Dorsolateral prefrontal cortex (tissue), 120 donors: ENCODE measurements at regions of chr9 and their contacts with region 1.

Region 1: DNA sequence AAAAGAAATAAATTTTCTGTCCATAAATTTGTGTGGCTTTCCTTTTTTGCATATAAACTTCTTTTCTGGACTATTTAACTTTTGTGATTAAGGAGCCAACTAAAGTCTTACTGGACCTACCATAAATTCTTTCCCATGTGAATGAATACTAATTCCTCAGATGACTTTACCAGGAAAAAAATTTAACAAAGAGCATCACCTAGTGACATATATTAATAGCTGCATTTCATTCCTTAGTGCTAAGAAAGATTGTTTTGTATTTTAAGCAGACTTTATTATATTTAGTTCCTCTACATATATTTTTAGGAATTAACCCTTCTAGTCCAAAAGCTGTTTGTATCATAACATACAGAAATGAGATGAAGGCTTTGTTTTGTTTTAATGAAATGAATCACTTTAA is 64.4 kb downstream of the C9orf85 start:
- DNase-seq: no peak
- H3K4me3 ChIP-seq: no peak overlapping the region
- H3K27ac ChIP-seq: peak overlapping the region in 2 of 59 donors; percentile 11 to 41
- H3K27me3 ChIP-seq: no peaks in the 10 kb centered on the region
- CTCF ChIP-seq: peak in 52 of 56 donors; percentile 22 to 75 (median 46)

Region 2: GRCh38 chr9:71812385-71812784 is 163.4 kb before region 1 on chr9:
- intact Hi-C with region 1: loop called (anchors 5 to 10 kb)
- DNase-seq: peak; percentile 23 to 79 (median 58)
- H3K4me3 ChIP-seq: peak overlapping the region in 3 of 59 donors; percentile 5 to 17 (median 5)
- H3K27ac ChIP-seq: peak overlapping the region in 41 of 59 donors; percentile 5 to 85 (median 56)
- H3K27me3 ChIP-seq: no peaks in the 10 kb centered on the region
- CTCF ChIP-seq: peak in 54 of 56 donors; percentile 35 to 75 (median 58)

Region 3: GRCh38 chr9:71819115-71819739 is 156.6 kb before region 1 on chr9:
- intact Hi-C with region 1: loop called (anchors 5 to 10 kb)
- DNase-seq: peak in 3 of 10 donors; percentile 17 to 43 (median 38)
- H3K4me3 ChIP-seq: no peak overlapping the region
- H3K27ac ChIP-seq: no peak overlapping the region
- H3K27me3 ChIP-seq: no peaks in the 10 kb centered on the region
- CTCF ChIP-seq: peak; percentile 62 to 94 (median 80)

Region 4: DNA sequence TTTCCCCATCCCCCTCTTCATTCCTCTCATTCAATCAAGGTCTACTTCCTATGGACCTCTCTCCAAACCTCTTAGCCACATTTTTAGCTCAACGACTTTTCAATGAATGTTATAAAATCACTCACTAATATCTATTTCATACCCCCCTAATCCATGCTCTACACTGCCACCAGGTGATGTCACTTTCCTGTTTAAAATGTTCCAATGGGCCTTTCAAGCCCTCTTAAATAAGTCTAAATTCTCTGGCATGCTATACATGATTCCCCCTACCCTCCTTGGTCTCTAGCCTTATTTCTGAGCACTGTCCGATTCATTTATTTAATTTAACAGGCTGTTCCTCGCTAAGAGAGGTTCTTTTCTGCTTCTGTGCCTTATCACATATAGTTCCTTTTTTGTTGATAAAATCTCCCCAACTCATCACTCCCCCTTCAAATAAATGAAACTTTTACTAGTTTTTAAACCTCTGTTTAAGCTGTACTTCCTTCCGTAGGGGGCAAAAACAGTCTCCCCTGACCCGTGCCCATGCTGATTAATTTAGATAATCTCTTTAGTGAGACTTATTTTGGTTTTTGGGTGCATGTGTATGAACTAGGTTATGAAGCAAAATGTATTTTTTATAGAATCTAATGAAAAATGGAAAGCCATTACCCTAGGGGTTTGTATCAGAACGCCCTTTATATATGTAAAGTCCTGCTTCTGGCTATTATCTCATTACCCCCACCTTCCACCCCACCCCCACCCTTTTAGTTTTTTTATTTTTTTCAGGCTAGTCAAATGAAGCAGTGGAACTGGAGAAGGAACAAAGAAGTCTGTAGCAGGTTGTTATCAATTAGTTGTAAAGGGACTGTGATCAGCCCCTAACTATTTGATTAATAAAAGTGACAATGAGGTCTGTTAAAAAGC is 73.9 kb before region 1 on chr9:
- intact Hi-C with region 1: no loop called
- DNase-seq: no peak
- H3K4me3 ChIP-seq: no peak overlapping the region
- H3K27ac ChIP-seq: peak overlapping the region in 8 of 59 donors; percentile 2 to 95 (median 8)
- H3K27me3 ChIP-seq: no peaks in the 10 kb centered on the region
- CTCF ChIP-seq: peak in 6 of 56 donors; percentile 9 to 44 (median 16)

Region 5: DNA sequence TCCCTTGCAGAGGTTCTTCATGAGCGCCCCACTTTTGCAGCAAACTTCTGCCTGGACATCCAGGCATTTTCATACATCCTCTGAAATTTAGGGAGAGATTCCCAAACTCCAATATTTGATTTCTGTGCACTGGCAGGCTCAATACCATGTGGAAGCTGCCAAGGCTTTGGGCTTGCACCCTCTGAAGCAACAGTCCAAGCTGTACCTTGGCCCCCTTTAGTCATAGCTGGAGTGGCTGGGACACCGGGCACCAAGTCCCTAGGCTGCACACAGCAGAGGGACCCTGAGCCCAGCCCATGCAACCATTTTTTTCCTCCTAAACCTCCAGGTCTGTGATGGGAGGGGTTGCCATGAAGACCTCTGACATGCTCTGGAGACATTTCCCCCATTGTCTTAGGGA is 314.5 kb after region 1 on chr9:
- intact Hi-C with region 1: no loop called
- DNase-seq: no peak
- H3K4me3 ChIP-seq: no peak overlapping the region
- H3K27ac ChIP-seq: no peak overlapping the region
- H3K27me3 ChIP-seq: no peaks in the 10 kb centered on the region
- CTCF ChIP-seq: no peak